ENCODE measurements at regions of chr1 and their contacts with region 1.

Region 1: GRCh38 chr1:234918181-234918841 is 210.3 kb downstream of the TOMM20 start:
- DNase-seq: peak; percentile 54 to 72
- ATAC-seq: peak; percentile 34 to 74 (median 66)
- H3K4me3 ChIP-seq: no peak overlapping the region
- H3K27ac ChIP-seq: peak overlapping the region; percentile 80 to 97 (median 88)
- H3K4me1 ChIP-seq: peaks cover 21 to 86% (median 78%) of the 10 kb centered on the region in 9 donors
- H3K27me3 ChIP-seq: no peaks in the 10 kb centered on the region
- CTCF ChIP-seq: no peak

Region 2: DNA sequence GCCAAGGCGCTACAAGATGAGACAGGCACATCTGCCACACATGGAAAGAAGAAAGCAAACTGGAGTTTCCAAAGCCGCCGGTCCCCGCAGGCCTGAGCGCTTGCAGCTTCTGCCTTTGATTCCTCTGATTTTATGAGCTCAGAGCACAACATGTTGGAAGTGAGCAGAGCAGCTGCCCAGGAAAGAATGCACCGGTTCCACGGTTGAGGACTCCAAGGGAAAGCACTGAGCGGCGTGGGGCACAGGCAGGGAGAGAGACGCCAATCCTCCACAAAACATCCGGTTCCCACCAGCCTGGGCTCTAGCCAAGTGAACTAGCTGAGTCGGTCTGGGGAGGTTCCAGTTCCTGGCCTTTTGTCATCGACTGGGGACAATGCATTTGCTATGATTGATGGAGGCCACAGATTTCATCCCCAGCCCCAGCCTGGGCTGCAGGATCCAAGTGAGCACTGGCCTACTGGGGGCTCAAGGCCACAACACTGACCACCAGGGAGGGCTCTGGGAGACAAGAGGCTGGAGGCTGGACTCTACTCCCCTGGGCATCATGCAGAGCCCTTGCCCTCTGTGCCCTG is 55.3 kb before region 1 on chr1:
- intact Hi-C with region 1: loop called in 1 of 10 experiments (anchors 5 kb)
- DNase-seq: peak; percentile 76 to 86
- ATAC-seq: peak; percentile 62 to 85 (median 76)
- H3K4me3 ChIP-seq: peak overlapping the region in 4 of 10 donors; percentile 4 to 17 (median 6)
- H3K27ac ChIP-seq: peak overlapping the region; percentile 60 to 93 (median 82)
- H3K4me1 ChIP-seq: peaks cover 6 to 51% (median 42%) of the 10 kb centered on the region in 9 donors
- H3K27me3 ChIP-seq: no peaks in the 10 kb centered on the region
- CTCF ChIP-seq: no peak

Region 3: GRCh38 chr1:234963180-234963903 is 45.0 kb after region 1 on chr1:
- intact Hi-C with region 1: loop called in 1 of 10 experiments (anchors 5 kb)
- DNase-seq: peak; percentile 76 to 84
- ATAC-seq: peak in 7 of 8 donors; percentile 56 to 81 (median 67)
- H3K4me3 ChIP-seq: peak overlapping the region in 1 of 10 donors; percentile 5
- H3K27ac ChIP-seq: peak overlapping the region; percentile 36 to 96 (median 76)
- H3K4me1 ChIP-seq: peaks cover 20 to 71% (median 54%) of the 10 kb centered on the region in 9 donors
- H3K27me3 ChIP-seq: no peaks in the 10 kb centered on the region
- CTCF ChIP-seq: no peak

Region 4: DNA sequence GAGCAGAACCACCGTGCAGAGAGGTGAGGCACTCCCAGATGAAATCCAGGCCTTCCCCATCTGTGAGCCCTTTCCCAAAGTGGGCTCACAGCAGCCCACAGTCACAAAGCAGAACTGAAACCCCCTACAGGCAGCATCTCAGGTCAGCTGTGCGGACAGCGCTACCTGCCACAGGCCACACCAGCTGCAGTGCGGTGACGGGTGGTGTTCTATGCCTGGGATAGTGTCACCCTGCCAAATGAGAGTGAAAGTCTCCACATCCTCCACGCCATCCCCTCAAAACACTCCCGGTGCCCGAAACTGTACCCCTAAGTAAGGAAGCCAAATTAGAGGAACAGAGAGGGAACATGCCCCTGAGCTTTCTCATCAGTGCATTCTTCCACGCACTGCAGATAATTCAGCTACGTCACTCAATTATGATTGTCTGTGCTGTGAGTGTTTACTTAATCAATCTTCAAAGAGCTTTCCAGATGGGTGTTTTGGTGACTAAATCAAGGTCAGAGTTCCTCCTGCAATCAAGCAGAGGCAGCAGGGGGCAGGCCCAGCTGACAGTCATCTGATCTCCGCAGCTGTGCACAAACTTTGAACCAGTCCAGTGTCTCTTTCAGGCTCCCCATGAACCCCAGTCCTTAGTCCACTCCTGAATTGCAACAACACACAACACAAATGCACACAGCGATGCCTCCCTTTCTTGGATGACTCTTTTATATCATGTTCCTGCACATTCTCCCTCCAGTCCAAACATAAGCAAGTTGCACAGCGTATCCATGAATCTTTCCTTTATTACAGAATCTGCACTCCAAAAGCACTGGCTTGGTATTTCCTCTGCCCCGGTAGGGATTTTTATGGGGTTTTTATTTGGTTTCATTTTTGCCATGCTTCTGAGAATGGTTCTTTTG is 60.3 kb after region 1 on chr1:
- intact Hi-C with region 1: loop called in 3 of 10 experiments (anchors 5 kb)
- DNase-seq: no peak
- ATAC-seq: peak in 7 of 8 donors; percentile 28 to 52 (median 39)
- H3K4me3 ChIP-seq: peak overlapping the region in 2 of 10 donors; percentile 9 to 47
- H3K27ac ChIP-seq: peak overlapping the region; percentile 83 to 98 (median 88)
- H3K4me1 ChIP-seq: peaks cover 15 to 93% (median 54%) of the 10 kb centered on the region in 9 donors
- H3K27me3 ChIP-seq: no peaks in the 10 kb centered on the region
- CTCF ChIP-seq: peak in 3 of 9 donors; percentile 27 to 40 (median 28)

Region 5: GRCh38 chr1:234987415-234988154 is 69.3 kb after region 1 on chr1:
- intact Hi-C with region 1: loop called in 2 of 10 experiments (anchors 5 kb)
- DNase-seq: peak; percentile 58 to 82
- ATAC-seq: peak; percentile 74 to 93 (median 90)
- H3K4me3 ChIP-seq: no peak overlapping the region
- H3K27ac ChIP-seq: peak overlapping the region; percentile 77 to 98 (median 88)
- H3K4me1 ChIP-seq: peaks cover 18 to 66% (median 44%) of the 10 kb centered on the region in 9 donors
- H3K27me3 ChIP-seq: no peaks in the 10 kb centered on the region
- CTCF ChIP-seq: no peak

Region 6: DNA sequence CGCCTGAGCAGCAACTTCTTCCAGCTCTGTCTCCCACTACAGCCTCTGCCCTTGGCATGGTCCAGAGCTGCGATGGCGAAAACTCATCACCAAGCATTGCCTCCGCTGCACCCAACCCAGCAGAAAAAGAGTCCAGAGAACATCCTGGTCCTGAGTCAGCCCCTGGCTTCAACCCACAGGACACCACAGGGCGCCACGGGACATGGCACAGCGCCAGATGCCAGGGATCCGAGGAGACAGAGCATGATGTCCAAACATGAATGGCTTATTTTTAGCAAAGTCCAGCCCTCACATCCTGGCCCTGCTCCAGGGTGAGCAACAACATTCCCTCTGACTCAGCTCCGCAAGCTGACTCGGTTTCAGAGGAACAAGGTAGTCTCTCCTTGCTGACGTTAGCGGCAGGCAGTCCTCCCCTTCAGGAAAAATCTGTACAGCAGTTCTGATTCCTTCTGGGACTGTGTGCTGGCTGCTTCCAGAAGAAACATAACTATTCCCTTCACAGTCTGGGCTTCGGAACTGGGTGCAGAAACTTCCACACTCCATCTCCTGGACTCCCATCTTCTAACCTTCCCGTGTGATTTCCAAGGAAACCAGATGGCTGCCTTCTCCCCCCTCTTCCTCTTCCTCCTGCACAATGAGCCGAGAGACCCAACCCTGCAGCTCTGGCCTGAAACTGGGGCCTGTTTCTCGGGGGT is 79.0 kb after region 1 on chr1:
- intact Hi-C with region 1: loop called in 1 of 10 experiments (anchors 5 kb)
- DNase-seq: peak; percentile 97
- ATAC-seq: peak; percentile 91 to 98 (median 96)
- H3K4me3 ChIP-seq: peak overlapping the region in 5 of 10 donors; percentile 6 to 13 (median 12)
- H3K27ac ChIP-seq: peak overlapping the region; percentile 87 to 95 (median 92)
- H3K4me1 ChIP-seq: peaks cover 21 to 35% (median 30%) of the 10 kb centered on the region in 9 donors
- H3K27me3 ChIP-seq: no peaks in the 10 kb centered on the region
- CTCF ChIP-seq: no peak